ENCODE measurements at regions of chr21 and their contacts with region 1.

Region 1: GRCh38 chr21:46124926-46125855 is 27.3 kb downstream of the COL6A2 start:
- DNase-seq: no peak
- H3K4me3 ChIP-seq: no peak overlapping the region
- H3K27ac ChIP-seq: no peak overlapping the region
- H3K4me1 ChIP-seq: no peaks in the 10 kb centered on the region
- H3K27me3 ChIP-seq: no peaks in the 10 kb centered on the region
- CTCF ChIP-seq: no peak

Region 2: DNA sequence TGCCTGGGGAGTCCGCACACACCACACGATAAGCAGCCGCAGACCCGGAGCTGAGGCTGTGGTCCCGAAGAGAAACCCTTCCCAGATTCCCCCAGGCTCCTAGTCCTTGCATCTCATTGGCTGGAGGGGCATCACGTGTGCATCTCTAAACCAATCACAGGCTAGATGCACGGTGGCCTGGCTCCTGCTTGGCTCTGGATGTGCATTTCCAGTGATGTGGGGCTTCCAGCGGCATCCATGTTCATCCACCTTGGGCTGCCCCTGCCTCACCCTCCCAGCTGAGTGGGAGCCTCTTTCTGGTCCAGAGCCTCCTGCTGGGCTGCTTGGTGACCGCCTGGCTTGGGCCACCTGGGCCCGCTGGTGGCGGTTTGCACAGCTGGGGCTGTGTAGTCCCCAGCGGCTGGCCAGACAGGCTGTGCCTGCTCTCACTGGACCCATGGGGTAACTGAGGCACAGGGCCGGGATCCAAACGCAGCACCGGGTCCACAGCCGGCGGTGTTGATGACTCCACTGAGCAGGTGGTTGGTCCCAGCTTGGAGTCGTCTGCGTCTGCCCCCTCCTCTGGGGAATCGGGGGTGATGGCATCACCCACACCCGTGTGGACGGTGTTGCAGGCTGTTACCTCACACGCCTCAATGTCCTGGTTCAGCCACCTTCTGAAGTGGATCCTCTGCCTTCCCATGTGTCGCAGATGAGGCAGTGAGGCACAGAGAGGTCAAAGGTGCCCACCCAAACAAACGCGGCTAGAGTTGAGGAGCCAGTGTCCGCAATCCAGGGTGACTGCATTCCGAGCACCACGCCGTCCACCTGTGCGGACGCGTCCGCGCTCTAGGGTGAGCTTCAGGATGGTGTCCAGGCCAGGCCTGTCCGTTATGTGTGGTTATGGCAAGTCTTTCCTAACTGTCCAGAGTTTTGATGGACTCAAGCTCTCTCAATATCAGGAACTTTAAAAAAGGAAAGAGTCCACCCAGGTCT is 102.4 kb before region 1 on chr21:
- CTCF ChIA-PET with region 1: no interaction called
- dilution Hi-C with region 1: loop called (anchors 5 kb)
- in situ Hi-C with region 1: no loop called
- intact Hi-C with region 1: no loop called
- DNase-seq: no peak
- H3K4me3 ChIP-seq: no peak overlapping the region
- H3K27ac ChIP-seq: no peak overlapping the region
- H3K4me1 ChIP-seq: no peaks in the 10 kb centered on the region
- H3K27me3 ChIP-seq: no peaks in the 10 kb centered on the region
- CTCF ChIP-seq: no peak

Region 3: GRCh38 chr21:46052703-46053651 is 72.2 kb before region 1 on chr21:
- CTCF ChIA-PET with region 1: no interaction called
- dilution Hi-C with region 1: loop called (anchors 5 kb)
- in situ Hi-C with region 1: no loop called
- intact Hi-C with region 1: no loop called
- DNase-seq: peak; percentile 76
- H3K4me3 ChIP-seq: no peak overlapping the region
- H3K27ac ChIP-seq: no peak overlapping the region
- H3K4me1 ChIP-seq: peaks cover 41% of the 10 kb centered on the region
- H3K27me3 ChIP-seq: no peaks in the 10 kb centered on the region
- CTCF ChIP-seq: no peak

Region 4: DNA sequence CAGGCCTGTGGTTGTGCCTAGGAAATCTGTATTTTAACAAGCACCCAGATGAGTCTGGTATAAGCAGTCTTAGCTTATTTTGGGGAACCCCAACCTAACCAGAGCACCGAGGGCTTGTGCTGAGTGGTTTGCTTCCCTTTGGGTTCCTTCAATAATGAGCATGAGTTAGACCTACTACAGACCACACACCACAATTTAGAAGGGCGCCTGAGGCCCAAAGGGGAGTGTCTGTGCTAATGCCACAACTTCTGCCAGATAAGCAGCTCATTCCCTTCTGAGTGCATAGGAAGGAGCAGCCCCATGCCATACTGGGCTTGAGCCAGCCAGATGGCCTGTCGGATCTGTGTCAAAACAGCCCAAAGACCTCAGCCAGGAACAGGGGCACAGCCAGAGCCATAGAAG is 118.8 kb after region 1 on chr21:
- CTCF ChIA-PET with region 1: no interaction called
- dilution Hi-C with region 1: no loop called
- in situ Hi-C with region 1: no loop called
- intact Hi-C with region 1: no loop called
- DNase-seq: no peak
- H3K4me3 ChIP-seq: no peak overlapping the region
- H3K27ac ChIP-seq: no peak overlapping the region
- H3K4me1 ChIP-seq: no peaks in the 10 kb centered on the region
- H3K27me3 ChIP-seq: no peaks in the 10 kb centered on the region
- CTCF ChIP-seq: no peak